CD14-positive monocyte (primary cell): ENCODE measurements at regions of chr12 and their contacts with region 1.

Region 1: DNA sequence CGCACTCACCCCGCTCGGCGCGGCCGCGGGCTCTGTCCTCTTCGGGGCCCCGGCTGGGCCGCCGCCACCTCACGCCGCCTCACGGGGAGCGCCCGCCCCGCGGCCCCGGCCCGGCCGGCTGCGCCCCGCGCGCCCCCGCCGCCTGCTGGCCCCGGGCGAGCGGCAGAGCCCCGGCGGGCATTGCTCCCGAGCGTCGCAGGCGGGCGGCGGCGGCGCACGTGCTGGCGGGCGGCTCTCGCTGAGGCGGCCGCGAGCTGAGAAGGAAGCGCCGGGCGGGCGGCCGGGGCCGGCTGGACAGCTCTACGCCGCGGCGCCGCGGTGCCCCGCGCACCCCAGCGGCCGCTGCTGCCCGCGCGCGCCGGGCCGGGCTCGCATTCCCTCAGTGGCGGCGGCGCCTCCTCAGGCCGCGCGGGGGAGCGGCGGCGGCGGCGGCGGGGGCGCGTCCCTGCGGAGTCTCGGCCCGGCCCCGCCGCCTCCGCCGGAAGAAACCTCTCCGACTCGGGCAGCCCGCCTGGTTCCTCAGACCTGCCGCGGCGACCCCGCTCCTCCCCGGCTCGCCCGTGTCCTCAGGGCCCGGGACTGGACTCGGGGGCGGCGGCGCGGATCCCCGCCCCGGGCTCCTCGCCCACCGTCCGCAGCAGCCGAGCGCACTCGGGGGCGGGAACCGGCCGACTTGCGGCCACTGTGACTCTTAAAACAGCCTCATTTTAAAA is at the start of gene PITPNM2:
- DNase-seq: peak; percentile 38 to 73 (median 67)
- H3K4me3 ChIP-seq: peak within 1 kb of the TSS; percentile 23 to 81 (median 45)
- H3K4me3 Mint-ChIP-seq: peak within 1 kb of the TSS; percentile 78 to 88
- H3K27ac ChIP-seq: no peak within 1 kb of the TSS
- H3K27ac Mint-ChIP-seq: peak within 1 kb of the TSS in 4 of 7 donors; percentile 8 to 74 (median 50)
- H3K4me1 ChIP-seq: peaks cover 13 to 14% of the 10 kb centered on the region in 2 donors
- H3K4me1 Mint-ChIP-seq: peaks cover 16% of the 10 kb centered on the region
- H3K27me3 ChIP-seq: peaks cover 11 to 23% of the 10 kb centered on the region in 2 donors
- H3K27me3 Mint-ChIP-seq: peaks cover 18 to 28% (median 21%) of the 10 kb centered on the region in 3 donors
- CTCF ChIP-seq: peak; percentile 37
- polyA plus RNA-seq, gene PITPNM2: 0.08 to 0.67 TPM in 2 of 3 donors, not detected in the other

Region 2: DNA sequence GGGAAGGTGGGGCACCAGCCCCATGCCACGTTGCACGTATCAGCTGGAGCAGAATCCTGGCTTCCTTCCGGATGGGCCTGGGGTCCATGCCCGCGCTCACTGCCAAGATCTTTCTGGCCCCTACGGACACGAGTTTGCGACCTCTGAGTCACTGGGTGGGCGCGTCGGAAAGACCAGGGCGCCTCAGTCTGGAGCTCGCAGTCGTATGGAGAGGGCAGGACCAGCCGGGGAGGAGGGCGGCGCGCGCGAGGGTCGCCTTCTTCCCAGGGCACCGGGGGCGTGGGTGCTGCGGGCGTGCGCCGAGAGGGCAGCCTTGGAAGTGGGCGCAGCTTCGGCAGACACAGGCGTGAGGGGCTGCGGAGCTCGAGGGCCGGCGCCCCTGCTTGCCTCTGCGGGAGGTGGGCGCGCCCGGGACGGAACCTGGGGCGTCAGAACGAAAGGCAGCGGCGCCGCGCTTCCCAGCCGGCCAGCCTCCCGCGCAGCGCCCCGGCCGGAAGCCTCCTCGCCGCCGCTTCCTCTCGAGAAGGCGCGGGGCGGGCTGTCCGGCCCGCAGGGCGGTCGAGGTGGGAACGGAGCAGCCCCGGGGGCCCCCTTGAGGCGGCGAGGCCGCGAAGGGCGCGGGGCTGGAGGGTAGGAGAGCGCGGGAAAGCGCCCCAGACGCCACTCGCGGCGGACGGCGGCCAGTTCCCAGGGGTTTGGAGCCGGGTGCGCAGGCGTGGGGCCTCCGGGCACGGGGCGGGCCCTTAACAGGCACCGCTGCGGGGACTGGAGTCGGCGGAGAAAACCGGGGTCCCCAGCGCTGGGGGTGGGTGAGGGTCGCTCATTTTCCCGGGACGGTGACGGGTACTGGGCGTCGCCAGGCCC is 170.5 kb before region 1 on chr12 and contains the start of gene ARL6IP4:
- intact Hi-C with region 1: loop called in 1 of 2 experiments (anchors 2 kb)
- DNase-seq: peak; percentile 25 to 37 (median 30)
- H3K4me3 ChIP-seq: peak within 1 kb of the TSS; percentile 71 to 90 (median 87)
- H3K4me3 Mint-ChIP-seq: peak within 1 kb of the TSS; percentile 89 to 94
- H3K27ac ChIP-seq: peak within 1 kb of the TSS; percentile 47 to 83
- H3K27ac Mint-ChIP-seq: peak within 1 kb of the TSS; percentile 71 to 89 (median 85)
- H3K4me1 ChIP-seq: peaks cover 73 to 78% of the 10 kb centered on the region in 2 donors
- H3K4me1 Mint-ChIP-seq: peaks cover 70% of the 10 kb centered on the region
- H3K27me3 ChIP-seq: no peaks in the 10 kb centered on the region
- H3K27me3 Mint-ChIP-seq: no peaks in the 10 kb centered on the region
- CTCF ChIP-seq: no peak
- polyA plus RNA-seq, gene ARL6IP4: 152 to 268 (median 167) TPM

Region 3: DNA sequence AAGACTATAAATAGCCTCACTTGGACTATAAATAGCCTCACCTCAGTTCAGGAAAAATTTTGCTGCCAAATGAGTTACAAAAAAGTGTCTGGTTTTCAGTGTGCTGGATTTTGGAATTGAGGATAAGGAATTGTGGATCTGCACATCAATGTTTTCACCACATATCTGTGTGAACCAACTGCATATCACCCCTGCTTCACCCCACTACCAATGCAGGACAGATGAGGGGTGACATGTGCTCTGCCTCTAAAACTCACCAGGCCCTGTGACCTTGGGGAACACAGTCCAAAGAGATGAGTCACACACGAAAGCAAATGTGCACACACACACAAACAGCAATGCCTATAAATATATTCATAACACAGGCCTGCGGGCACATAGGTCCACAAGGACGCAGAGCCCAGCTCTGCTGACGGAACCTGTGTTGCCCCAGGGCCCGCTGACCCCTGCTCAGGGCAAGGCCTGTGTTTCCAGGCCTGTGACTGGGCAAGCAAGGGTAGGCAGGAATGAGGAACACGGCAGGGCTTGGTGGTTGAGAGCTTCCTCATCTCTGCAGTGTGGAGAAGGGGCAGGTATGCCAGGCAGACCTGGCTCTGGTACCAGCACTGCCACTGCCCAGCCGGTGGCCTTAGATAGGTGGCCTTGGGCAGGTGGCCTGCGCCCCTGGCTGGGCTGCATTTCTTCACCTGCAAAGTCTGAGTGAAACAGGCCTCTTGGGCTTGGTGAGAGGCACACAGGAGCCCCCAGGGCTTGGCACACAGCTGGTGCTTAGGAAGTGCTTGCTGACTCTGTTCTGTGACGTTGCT is 88.0 kb before region 1 on chr12:
- intact Hi-C with region 1: loop called in 1 of 2 experiments (anchors 2 kb)
- DNase-seq: peak; percentile 67 to 73 (median 71)
- H3K4me3 ChIP-seq: no peak overlapping the region
- H3K4me3 Mint-ChIP-seq: no peak overlapping the region
- H3K27ac ChIP-seq: peak overlapping the region; percentile 50 to 62
- H3K27ac Mint-ChIP-seq: peak overlapping the region; percentile 62 to 81 (median 76)
- H3K4me1 ChIP-seq: peaks cover 44 to 47% of the 10 kb centered on the region in 2 donors
- H3K4me1 Mint-ChIP-seq: peaks cover 61% of the 10 kb centered on the region
- H3K27me3 ChIP-seq: no peaks in the 10 kb centered on the region
- H3K27me3 Mint-ChIP-seq: peaks cover 0 to 2% (median 1%) of the 10 kb centered on the region in 3 donors
- CTCF ChIP-seq: no peak

Region 4: GRCh38 chr12:123085730-123086487 is 65.0 kb before region 1 on chr12:
- intact Hi-C with region 1: loop called in 1 of 2 experiments (anchors 5 kb)
- DNase-seq: peak; percentile 47 to 70 (median 64)
- H3K4me3 ChIP-seq: no peak overlapping the region
- H3K4me3 Mint-ChIP-seq: no peak overlapping the region
- H3K27ac ChIP-seq: no peak overlapping the region
- H3K27ac Mint-ChIP-seq: no peak overlapping the region
- H3K4me1 ChIP-seq: peaks cover 34 to 52% of the 10 kb centered on the region in 2 donors
- H3K4me1 Mint-ChIP-seq: peaks cover 47% of the 10 kb centered on the region
- H3K27me3 ChIP-seq: no peaks in the 10 kb centered on the region
- H3K27me3 Mint-ChIP-seq: peaks cover 2 to 4% (median 3%) of the 10 kb centered on the region in 3 donors
- CTCF ChIP-seq: peak; percentile 30